Activated B cell treated with CpG ODN at 0.5 μM for 24 hours (primary cell): ENCODE measurements at regions of chr3 and their contacts with region 1.

Region 1: GRCh38 chr3:62622553-62623193 is 249.3 kb upstream of the FEZF2 start:
- DNase-seq: no peak
- ATAC-seq: no peak
- H3K4me3 Mint-ChIP-seq: no peak overlapping the region
- H3K27ac Mint-ChIP-seq: no peak overlapping the region
- H3K4me1 Mint-ChIP-seq: peaks cover 2% of the 10 kb centered on the region
- H3K27me3 Mint-ChIP-seq: no peaks in the 10 kb centered on the region
- CTCF ChIP-seq: no peak

Region 2: GRCh38 chr3:61927332-61927731 is 695.3 kb before region 1 on chr3:
- CTCF ChIA-PET with region 1: no interaction called
- POLR2A ChIA-PET with region 1: no interaction called
- intact Hi-C with region 1: no loop called
- DNase-seq: no peak
- ATAC-seq: no peak
- H3K4me3 Mint-ChIP-seq: no peak overlapping the region
- H3K27ac Mint-ChIP-seq: no peak overlapping the region
- H3K4me1 Mint-ChIP-seq: no peaks in the 10 kb centered on the region
- H3K27me3 Mint-ChIP-seq: no peaks in the 10 kb centered on the region
- CTCF ChIP-seq: no peak

Region 3: DNA sequence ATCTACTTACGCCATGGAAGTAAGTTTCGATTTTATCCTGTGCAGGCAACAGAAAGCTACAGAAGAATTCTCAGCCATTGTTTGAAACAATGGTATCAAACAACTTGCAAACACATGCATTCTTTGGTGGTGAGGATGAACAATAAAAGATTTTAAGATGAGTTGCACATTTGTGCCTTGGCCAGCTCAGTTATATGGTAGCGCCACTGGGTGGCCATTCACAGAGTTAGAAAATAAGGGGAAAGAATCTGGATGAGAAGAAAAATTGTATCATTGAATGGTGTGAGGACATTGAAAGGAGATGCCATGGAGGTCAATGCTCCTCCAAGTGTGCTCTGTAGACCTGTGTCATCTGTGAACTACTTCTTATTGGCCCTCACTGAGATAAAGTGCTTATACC is 241.0 kb after region 1 on chr3:
- CTCF ChIA-PET with region 1: no interaction called
- POLR2A ChIA-PET with region 1: no interaction called
- intact Hi-C with region 1: no loop called
- DNase-seq: no peak
- ATAC-seq: no peak
- H3K4me3 Mint-ChIP-seq: no peak overlapping the region
- H3K27ac Mint-ChIP-seq: no peak overlapping the region
- H3K4me1 Mint-ChIP-seq: no peaks in the 10 kb centered on the region
- H3K27me3 Mint-ChIP-seq: no peaks in the 10 kb centered on the region
- CTCF ChIP-seq: no peak

Region 4: DNA sequence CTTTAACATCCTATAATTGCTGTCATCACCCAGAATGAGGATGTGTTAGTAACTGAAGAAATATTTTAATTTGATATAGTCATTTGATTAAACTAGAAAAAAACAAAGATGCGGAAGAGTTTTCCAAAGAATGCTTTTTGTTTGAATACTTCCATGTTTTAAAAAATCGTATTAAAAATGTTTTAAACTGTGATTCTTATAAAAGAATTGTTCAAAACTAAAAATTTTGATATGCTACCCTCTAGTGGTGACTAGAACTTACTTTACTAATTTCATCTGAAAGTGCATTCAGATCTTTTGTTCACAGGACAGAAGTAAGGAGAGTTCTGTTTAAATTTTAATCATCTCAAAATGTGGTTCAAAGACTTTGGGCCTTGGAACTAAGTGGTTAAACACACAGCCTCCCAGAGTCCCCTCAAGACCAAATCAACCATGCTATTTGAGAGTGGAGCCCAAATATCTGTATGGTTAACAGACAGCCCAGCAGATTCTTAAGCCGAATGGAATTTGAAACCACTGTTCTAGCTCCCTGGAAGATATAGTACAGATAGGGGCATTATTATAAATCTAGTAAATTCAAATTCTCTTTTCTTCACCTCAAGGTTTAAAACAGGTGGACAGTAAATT is 610.2 kb after region 1 on chr3:
- CTCF ChIA-PET with region 1: interaction called, 7 read pairs
- POLR2A ChIA-PET with region 1: no interaction called
- intact Hi-C with region 1: loop called (anchors 1 kb)
- DNase-seq: no peak
- ATAC-seq: no peak
- H3K4me3 Mint-ChIP-seq: no peak overlapping the region
- H3K27ac Mint-ChIP-seq: no peak overlapping the region
- H3K4me1 Mint-ChIP-seq: peaks cover 2% of the 10 kb centered on the region
- H3K27me3 Mint-ChIP-seq: no peaks in the 10 kb centered on the region
- CTCF ChIP-seq: no peak